Naive thymus-derived CD4-positive, alpha-beta T cell (primary cell): ENCODE measurements at regions of chr12 and their contacts with region 1.

Region 1: DNA sequence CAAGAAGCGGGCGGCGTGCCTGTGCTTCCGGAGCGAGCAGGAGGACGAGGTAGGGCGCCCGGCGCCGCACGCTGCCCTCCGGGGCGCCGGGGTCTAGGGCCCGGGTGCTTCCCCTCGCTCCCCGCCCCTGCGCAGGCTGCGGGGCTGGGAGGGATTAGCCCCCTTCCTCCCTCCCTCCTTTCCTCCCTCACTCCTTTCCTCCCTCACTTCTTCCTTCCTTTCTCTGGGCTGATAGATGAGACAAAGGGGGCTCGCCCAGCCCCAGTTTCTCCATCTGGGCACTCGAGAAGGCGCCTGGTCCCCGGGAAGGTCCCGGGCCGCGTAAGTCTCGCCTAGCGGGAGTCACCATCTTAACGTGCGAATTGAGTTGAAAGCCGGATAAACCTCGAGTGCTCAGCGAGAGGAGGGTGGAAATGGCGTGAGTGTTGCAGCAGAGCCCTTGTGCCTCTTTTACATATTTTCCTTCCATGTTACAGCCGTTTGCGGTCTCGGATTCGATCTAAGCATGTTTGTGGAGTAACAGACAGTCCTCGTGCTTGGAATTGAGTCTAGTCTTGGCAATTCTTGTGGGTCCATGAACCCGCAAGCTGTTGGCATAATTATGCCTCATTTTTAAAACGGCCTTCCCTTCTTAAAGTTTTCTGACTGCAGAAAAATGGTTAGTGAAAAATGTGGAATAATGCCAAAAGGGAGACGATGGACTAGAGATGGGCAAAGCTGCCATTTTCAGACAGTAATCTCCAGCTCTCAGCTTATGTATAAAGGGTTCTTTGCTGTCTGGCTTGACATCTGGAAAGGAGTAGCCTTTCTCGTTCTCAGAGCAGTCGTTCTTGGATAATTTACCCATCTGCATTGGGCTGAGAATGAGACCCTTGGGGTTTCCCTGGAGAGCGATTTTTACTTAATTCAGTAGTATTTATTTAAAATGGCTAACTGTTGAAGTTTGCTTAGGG is 924 bp downstream of the NUDT4 start:
- DNase-seq: peak; percentile 47 to 73 (median 69)
- ATAC-seq: peak; percentile 60
- H3K4me3 ChIP-seq: peak overlapping the region; percentile 76
- H3K4me3 Mint-ChIP-seq: peak overlapping the region; percentile 98 to 100 (median 99)
- H3K27ac ChIP-seq: peak overlapping the region; percentile 94
- H3K27ac Mint-ChIP-seq: peak overlapping the region; percentile 94 to 100 (median 99)
- H3K4me1 ChIP-seq: peaks cover 19 to 22% of the 10 kb centered on the region in 2 donors
- H3K4me1 Mint-ChIP-seq: peaks cover 34 to 62% (median 51%) of the 10 kb centered on the region in 7 donors
- H3K27me3 ChIP-seq: no peaks in the 10 kb centered on the region
- H3K27me3 Mint-ChIP-seq: no peaks in the 10 kb centered on the region

Region 2: DNA sequence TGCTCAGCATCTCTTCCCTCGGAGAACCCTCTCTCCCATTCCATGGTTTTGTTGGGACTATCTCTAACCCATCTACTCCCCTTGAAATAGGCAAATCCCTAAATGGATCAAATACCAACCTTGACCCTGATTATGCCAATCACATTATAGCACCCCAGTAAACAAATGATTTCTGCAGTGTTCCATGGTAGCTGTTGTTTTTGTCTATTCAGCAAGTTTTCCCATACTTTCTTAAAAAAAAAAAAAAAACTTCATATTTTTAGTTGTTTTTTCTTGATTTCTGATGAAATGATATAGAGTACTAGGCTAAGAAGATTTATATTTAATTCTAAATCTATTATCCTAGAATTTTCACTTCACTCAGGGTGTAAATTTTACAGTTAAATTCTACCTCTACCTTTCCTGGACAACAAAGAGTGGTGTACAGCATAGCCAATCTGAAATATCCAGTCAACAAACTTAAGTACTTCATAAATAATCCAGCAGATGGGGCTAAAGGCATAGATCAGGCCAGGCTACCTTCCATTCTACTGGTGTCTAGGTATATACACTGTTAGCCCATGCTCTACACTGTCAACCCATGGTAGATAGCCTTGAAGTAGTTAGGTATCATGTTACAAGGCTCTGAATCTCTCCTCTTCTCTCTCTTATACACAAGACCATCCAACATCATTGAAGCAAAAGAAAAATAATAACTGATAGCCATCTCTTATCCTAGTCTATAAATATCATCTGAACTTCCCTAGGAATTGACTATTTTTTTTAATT is 593.7 kb before region 1 on chr12:
- CTCF ChIA-PET with region 1: interaction called, 6 read pairs
- POLR2A ChIA-PET with region 1: no interaction called
- intact Hi-C with region 1: loop called (anchors 1 to 5 kb)
- DNase-seq: peak in 7 of 9 donors; percentile 61 to 80 (median 70)
- ATAC-seq: peak; percentile 99
- H3K4me3 ChIP-seq: no peak overlapping the region
- H3K4me3 Mint-ChIP-seq: no peak overlapping the region
- H3K27ac ChIP-seq: no peak overlapping the region
- H3K27ac Mint-ChIP-seq: peak overlapping the region in 1 of 9 donors; percentile 0
- H3K4me1 ChIP-seq: no peaks in the 10 kb centered on the region
- H3K4me1 Mint-ChIP-seq: peaks cover 4 to 19% (median 9%) of the 10 kb centered on the region in 7 donors
- H3K27me3 ChIP-seq: no peaks in the 10 kb centered on the region
- H3K27me3 Mint-ChIP-seq: no peaks in the 10 kb centered on the region

Region 3: DNA sequence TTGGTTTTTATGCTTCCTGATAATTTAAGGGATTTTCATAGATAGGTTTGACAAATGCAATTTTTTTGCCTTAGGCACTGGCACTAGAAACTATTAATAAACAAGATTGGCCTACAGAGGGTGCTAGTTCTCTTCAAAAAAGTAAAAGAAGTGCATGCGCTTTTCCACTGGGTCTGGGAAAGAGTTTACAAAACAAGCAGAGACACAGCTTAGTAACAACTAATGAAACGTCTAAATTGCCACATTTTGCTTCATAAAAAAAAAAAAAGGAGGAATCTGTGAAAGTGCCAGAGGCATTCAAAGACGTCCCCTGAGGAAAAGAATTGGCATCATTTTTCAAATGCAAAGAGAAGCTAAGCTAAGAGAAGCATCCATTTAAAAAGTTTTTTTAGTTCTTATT is 391.3 kb before region 1 on chr12:
- CTCF ChIA-PET with region 1: interaction called, 3 read pairs
- POLR2A ChIA-PET with region 1: no interaction called
- intact Hi-C with region 1: loop called (anchors 1 kb)
- DNase-seq: peak in 7 of 9 donors; percentile 41 to 66 (median 56)
- ATAC-seq: peak; percentile 81
- H3K4me3 ChIP-seq: no peak overlapping the region
- H3K4me3 Mint-ChIP-seq: peak overlapping the region in 9 of 10 donors; percentile 18 to 80 (median 65)
- H3K27ac ChIP-seq: no peak overlapping the region
- H3K27ac Mint-ChIP-seq: peak overlapping the region in 5 of 9 donors; percentile 35 to 68 (median 59)
- H3K4me1 ChIP-seq: peaks cover 0 to 8% of the 10 kb centered on the region in 2 donors
- H3K4me1 Mint-ChIP-seq: peaks cover 5 to 13% (median 12%) of the 10 kb centered on the region in 7 donors
- H3K27me3 ChIP-seq: no peaks in the 10 kb centered on the region
- H3K27me3 Mint-ChIP-seq: peaks cover 0 to 5% (median 0%) of the 10 kb centered on the region in 5 donors

Region 4: DNA sequence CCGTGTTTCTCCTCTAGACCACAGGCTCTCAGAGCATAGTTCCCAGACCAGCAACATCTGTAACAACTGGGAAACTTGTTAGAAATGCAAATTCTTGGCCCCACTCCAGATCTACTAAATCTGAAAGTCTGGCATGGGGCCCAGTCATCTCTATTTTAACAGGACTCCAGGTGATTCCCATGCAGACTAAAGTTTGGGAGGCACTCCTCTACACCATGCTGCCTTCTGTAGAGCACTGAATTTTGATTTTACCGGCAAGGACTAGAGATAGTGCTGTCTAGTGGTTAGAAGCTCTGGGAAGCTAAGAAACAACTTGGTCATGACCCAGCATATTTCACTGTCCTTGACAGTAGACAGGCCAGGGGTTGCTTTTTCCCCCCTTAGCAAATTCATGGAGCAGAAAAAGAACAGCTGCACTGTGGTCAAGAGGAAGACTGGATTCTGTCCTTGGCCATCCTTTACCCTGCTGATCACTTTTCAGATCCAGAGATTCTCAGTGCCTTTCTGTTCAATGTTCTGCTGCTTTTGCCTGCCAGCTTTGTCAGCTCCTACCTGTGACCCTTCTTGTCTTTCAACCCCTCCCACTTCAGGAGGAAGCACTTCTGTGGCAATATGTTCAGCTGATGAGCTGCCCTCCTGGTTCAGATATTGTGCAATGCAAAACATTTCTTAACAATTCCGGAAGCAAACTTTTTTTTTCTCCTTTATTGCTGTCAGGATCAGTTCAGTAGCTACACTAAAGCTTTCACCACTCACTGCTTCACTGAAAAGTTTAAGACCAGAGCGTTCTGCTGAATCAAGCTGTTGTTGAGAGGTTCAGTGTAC is 134.7 kb before region 1 on chr12:
- CTCF ChIA-PET with region 1: interaction called, 4 read pairs
- POLR2A ChIA-PET with region 1: interaction called, 5 read pairs
- intact Hi-C with region 1: loop called (anchors 1 kb)
- DNase-seq: peak in 6 of 9 donors; percentile 20 to 60 (median 40)
- ATAC-seq: peak; percentile 68
- H3K4me3 ChIP-seq: no peak overlapping the region
- H3K4me3 Mint-ChIP-seq: peak overlapping the region; percentile 12 to 79 (median 70)
- H3K27ac ChIP-seq: peak overlapping the region; percentile 46
- H3K27ac Mint-ChIP-seq: peak overlapping the region in 8 of 9 donors; percentile 75 to 91 (median 88)
- H3K4me1 ChIP-seq: peaks cover 11 to 23% of the 10 kb centered on the region in 2 donors
- H3K4me1 Mint-ChIP-seq: peaks cover 27 to 65% (median 56%) of the 10 kb centered on the region in 7 donors
- H3K27me3 ChIP-seq: no peaks in the 10 kb centered on the region
- H3K27me3 Mint-ChIP-seq: no peaks in the 10 kb centered on the region

Region 5: GRCh38 chr12:93441617-93442410 is 63.2 kb after region 1 on chr12 and contains the start of gene UBE2N:
- CTCF ChIA-PET with region 1: interaction called, 3 read pairs
- POLR2A ChIA-PET with region 1: no interaction called
- intact Hi-C with region 1: loop called (anchors 1 kb)
- DNase-seq: peak; percentile 96 to 98 (median 97)
- ATAC-seq: peak; percentile 95
- H3K4me3 ChIP-seq: peak within 1 kb of the TSS; percentile 66
- H3K4me3 Mint-ChIP-seq: peak within 1 kb of the TSS; percentile 89 to 100 (median 97)
- H3K27ac ChIP-seq: peak within 1 kb of the TSS; percentile 98
- H3K27ac Mint-ChIP-seq: peak within 1 kb of the TSS; percentile 96 to 100 (median 98)
- H3K4me1 ChIP-seq: peaks cover 35 to 48% of the 10 kb centered on the region in 2 donors
- H3K4me1 Mint-ChIP-seq: peaks cover 44 to 54% (median 49%) of the 10 kb centered on the region in 7 donors
- H3K27me3 ChIP-seq: no peaks in the 10 kb centered on the region
- H3K27me3 Mint-ChIP-seq: no peaks in the 10 kb centered on the region
- total RNA-seq, gene UBE2N: 76.6 to 180 (median 77.5) TPM

Region 6: GRCh38 chr12:94207849-94208621 is 829.4 kb after region 1 on chr12:
- CTCF ChIA-PET with region 1: no interaction called
- POLR2A ChIA-PET with region 1: no interaction called
- intact Hi-C with region 1: loop called in 1 of 2 experiments (anchors 5 kb)
- DNase-seq: peak in 8 of 9 donors; percentile 24 to 55 (median 48)
- ATAC-seq: peak; percentile 86
- H3K4me3 ChIP-seq: peak overlapping the region; percentile 58
- H3K4me3 Mint-ChIP-seq: peak overlapping the region; percentile 70 to 87 (median 82)
- H3K27ac ChIP-seq: peak overlapping the region; percentile 61
- H3K27ac Mint-ChIP-seq: peak overlapping the region; percentile 90 to 98 (median 94)
- H3K4me1 ChIP-seq: peaks cover 40 to 49% of the 10 kb centered on the region in 2 donors
- H3K4me1 Mint-ChIP-seq: peaks cover 36 to 58% (median 56%) of the 10 kb centered on the region in 7 donors
- H3K27me3 ChIP-seq: no peaks in the 10 kb centered on the region
- H3K27me3 Mint-ChIP-seq: no peaks in the 10 kb centered on the region